BJ (cell line): ENCODE measurements at regions of chr20 and their contacts with region 1.

Region 1: DNA sequence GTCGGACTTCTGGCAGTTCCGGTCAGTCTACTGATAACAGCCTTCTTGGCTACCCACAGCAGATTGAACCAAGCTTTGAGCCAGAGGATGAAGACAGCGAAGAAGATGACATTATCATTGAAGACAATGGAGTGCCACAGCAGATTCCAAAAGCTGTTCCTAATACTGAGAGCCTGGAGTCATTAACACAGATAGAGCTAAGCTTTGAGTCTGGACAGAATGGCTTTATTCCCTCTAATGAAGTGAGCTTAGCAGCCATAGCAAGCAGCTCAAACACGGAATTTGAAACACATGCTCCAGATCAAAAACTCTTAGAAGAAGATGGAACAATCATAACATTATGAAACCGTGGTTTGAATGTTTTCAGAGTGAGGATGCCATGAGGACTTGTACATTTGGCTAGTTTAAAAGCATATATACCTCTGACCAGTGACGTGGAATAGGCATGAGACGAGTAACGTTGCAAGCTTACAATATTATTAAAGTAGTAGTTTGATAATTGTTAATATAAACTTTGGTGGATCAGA is 18.8 kb downstream of the PARD6B start:
- DNase-seq: no peak
- H3K4me3 ChIP-seq: no peak overlapping the region
- H3K27me3 ChIP-seq: no peaks in the 10 kb centered on the region
- CTCF ChIP-seq: no peak

Region 2: DNA sequence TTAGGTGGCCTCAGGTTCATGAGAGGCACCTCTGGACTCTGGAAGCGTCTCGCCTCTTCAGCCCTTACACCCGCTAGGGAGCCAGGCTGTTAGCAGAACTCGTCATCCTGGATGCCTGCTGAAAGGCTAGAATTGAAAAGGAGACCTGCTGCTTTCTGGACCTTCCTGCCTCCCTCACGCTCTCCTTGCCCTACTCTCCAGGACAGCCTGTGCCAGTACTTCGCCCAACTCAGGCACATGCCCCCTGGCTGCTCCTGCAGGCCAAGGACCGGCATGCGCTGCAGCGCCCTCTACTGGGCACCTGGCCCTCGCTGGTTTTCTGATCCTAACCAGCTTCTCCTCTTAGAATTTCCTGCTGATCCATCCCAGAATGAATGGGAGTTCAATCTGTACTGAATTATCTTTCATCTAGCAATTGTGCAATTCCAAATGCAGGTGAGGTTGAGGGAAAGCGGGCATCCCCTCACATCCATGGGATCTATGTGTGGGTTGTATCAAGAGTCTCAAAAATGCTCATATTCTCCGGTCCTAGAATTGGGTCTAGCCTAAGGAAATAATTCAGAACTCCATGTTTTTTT is 162.1 kb before region 1 on chr20:
- CTCF ChIA-PET with region 1: interaction called, 16 read pairs
- POLR2A ChIA-PET with region 1: no interaction called
- DNase-seq: no peak
- H3K4me3 ChIP-seq: no peak overlapping the region
- H3K27me3 ChIP-seq: no peaks in the 10 kb centered on the region
- CTCF ChIP-seq: peak; percentile 98

Region 3: GRCh38 chr20:50625986-50626677 is 124.1 kb before region 1 on chr20:
- CTCF ChIA-PET with region 1: interaction called, 45 read pairs
- POLR2A ChIA-PET with region 1: no interaction called
- DNase-seq: no peak
- H3K4me3 ChIP-seq: no peak overlapping the region
- H3K27me3 ChIP-seq: no peaks in the 10 kb centered on the region
- CTCF ChIP-seq: peak; percentile 82

Region 4: DNA sequence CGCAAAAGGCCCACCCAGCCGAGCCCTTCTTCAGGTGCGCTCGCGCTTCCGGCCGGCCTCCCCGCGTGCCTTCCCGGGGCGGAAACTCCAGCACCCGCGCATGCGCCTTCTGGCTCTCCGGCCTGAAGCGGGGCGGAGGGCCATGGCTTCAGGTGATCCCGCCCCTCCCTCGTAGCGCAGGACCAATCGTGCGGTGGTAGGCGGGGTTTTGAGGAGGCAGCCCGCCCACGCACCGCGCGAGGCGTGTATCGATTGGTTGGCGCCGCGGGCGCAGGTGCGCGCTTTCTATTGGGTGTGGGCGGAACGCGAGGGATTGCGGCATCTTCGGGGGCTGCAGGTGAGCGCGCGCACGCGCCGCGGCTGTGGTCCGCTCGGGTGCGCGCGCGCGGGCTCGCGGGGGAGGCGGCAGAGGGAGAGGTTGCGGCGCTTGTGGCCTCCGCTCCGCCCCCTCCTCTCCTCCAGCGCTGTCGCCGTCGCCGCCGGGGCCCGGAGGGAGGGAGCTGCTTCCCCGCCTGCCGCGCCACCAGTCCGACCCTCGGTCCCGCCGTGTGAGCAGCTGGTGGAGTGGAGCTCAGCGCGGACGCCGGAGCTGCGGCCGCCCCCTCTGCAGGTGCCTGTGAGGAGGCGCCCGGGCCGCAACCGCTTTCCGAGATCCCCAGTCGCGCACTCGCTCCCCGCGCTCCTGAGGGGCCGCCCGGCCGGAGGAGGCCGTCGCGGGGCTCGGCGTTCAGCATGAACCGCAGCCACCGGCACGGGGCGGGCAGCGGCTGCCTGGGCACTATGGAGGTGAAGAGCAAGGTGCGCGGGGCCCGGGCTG is 18.9 kb before region 1 on chr20 and contains the start of gene PARD6B:
- CTCF ChIA-PET with region 1: interaction called, 5 read pairs
- POLR2A ChIA-PET with region 1: interaction called, 10 read pairs
- DNase-seq: peak; percentile 68
- H3K4me3 ChIP-seq: peak within 1 kb of the TSS; percentile 76
- H3K27me3 ChIP-seq: no peaks in the 10 kb centered on the region
- CTCF ChIP-seq: no peak
- polyA plus RNA-seq, gene PARD6B: 0.11 and 0.27 TPM in 2 replicates

Region 5: DNA sequence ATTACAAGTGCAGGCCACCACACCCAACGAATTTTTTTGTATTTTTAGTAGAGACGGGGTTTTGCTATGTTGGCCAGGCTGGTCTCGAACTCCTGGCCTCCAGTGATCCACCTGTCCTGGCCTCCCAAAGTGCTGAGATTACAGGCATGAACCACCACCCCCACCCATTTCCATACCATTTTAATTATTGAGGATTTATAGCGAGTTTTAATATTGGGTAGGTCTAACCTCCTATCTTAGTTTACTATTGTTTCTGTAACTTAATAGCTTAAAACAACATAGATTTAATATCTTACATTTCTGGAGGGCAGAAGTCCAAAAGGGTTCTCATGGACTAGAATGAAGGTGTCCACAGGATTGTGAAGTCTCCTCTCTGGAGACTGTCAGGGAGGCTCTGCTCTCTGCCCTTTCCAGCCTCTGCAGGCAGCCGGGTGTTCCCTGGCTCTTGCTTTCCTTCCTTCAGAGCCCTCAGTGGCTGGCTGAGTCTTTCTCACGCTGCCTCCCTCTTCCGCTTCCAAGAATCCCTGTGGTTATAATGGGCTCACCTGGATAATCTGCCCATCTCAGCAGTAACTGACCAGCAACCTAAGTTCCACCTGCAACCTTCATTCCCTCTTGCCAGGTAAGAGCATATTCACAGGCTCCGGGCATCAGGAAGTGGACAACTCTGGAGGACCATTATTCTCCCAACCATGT is 26.1 kb after region 1 on chr20:
- CTCF ChIA-PET with region 1: interaction called, 11 read pairs
- POLR2A ChIA-PET with region 1: no interaction called
- DNase-seq: no peak
- H3K4me3 ChIP-seq: no peak overlapping the region
- H3K27me3 ChIP-seq: no peaks in the 10 kb centered on the region; the same call in 1 of the 2 replicates
- CTCF ChIP-seq: no peak

Region 6: GRCh38 chr20:50799890-50800655 is 49.9 kb after region 1 on chr20:
- CTCF ChIA-PET with region 1: no interaction called
- POLR2A ChIA-PET with region 1: no interaction called
- DNase-seq: no peak
- H3K4me3 ChIP-seq: no peak overlapping the region
- H3K27me3 ChIP-seq: no peaks in the 10 kb centered on the region
- CTCF ChIP-seq: no peak

Region 7: GRCh38 chr20:50815162-50815989 is 65.2 kb after region 1 on chr20:
- CTCF ChIA-PET with region 1: no interaction called
- POLR2A ChIA-PET with region 1: no interaction called
- DNase-seq: no peak
- H3K4me3 ChIP-seq: no peak overlapping the region
- H3K27me3 ChIP-seq: no peaks in the 10 kb centered on the region
- CTCF ChIP-seq: no peak

Region 8: DNA sequence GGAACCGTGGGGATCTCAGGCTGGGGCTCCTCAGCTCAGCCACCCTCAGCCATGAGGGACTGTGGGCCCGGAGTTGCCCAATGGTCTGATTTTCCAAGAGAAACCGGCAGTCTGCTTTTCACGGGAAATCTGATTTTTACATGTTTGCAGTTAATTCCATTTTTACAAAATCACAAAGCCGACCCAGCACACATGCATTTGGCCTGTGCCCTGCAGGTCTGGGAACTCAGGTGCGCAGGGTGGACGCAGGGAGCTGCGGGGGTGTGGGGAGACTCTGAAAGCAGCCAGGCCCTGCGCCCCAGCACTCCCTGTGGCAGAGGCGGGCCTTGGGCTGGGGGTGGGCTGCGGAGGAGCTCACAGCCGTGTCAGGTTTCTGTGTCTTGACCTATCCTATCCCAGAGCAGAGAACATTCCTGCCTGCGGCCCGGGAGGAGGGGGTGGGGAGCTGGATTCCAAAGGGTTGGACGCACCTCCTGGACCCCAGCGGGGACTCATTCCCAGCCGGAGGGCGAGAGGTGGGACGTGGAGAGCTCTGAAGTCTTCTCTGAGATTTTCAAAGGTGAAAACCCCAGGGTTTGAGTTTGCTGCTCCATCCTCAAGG is 120.5 kb after region 1 on chr20:
- CTCF ChIA-PET with region 1: no interaction called
- POLR2A ChIA-PET with region 1: no interaction called
- DNase-seq: no peak
- H3K4me3 ChIP-seq: no peak overlapping the region
- H3K27me3 ChIP-seq: no peaks in the 10 kb centered on the region
- CTCF ChIP-seq: no peak